Panc1 (cell line): ENCODE measurements at regions of chr14 and their contacts with region 1.

Region 1: DNA sequence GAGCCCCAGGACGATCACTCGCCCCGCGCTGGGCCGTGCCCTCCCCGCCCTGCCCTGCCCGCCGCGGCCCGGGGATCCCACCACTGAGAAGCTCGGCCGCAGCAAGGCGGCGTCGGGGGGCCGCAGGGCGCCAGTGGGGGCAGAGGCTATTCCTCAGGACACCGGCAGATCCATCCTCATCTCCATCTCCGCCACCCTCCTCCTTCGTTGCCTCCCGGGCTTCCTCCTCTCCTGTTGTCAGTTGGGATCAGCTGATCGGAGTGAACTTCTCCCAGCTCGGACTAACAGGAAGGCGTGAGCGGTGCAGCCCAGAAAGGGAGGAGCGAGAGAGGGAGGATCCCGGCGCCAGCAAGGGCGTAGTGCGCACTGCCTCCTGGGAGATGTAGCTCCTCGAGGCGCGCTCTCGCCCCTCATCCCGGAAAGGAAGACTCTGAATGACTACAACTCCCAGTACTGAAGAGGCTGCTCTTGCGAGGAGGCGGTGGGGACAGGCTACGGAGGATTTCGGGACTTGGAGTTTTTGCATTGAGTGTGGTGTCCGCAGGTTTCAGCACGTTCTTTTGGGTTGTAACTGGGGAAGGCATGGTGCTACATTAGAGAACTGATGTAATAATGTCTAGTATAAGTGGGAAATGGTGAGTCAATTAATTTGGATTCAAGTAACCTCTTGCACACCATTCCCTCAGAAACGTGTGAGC is at the start of gene ZFYVE1:
- DNase-seq: peak; percentile 93
- ATAC-seq: peak; percentile 99
- H3K4me3 ChIP-seq: peak within 1 kb of the TSS; percentile 65 to 71
- H3K27ac ChIP-seq: peak within 1 kb of the TSS; percentile 86
- H3K4me1 ChIP-seq: peaks cover 4% of the 10 kb centered on the region
- H3K27me3 ChIP-seq: no peaks in the 10 kb centered on the region
- CTCF ChIP-seq: no peak
- total RNA-seq, gene ZFYVE1: 19.8 TPM

Region 2: GRCh38 chr14:72972316-72972715 is 54.7 kb before region 1 on chr14:
- CTCF ChIA-PET with region 1: no interaction called
- POLR2A ChIA-PET with region 1: interaction called, 10 read pairs
- in situ Hi-C with region 1: no loop called
- intact Hi-C with region 1: no loop called
- DNase-seq: no peak
- ATAC-seq: no peak
- H3K4me3 ChIP-seq: no peak overlapping the region
- H3K27ac ChIP-seq: no peak overlapping the region
- H3K4me1 ChIP-seq: no peaks in the 10 kb centered on the region
- H3K27me3 ChIP-seq: no peaks in the 10 kb centered on the region
- CTCF ChIP-seq: no peak

Region 3: DNA sequence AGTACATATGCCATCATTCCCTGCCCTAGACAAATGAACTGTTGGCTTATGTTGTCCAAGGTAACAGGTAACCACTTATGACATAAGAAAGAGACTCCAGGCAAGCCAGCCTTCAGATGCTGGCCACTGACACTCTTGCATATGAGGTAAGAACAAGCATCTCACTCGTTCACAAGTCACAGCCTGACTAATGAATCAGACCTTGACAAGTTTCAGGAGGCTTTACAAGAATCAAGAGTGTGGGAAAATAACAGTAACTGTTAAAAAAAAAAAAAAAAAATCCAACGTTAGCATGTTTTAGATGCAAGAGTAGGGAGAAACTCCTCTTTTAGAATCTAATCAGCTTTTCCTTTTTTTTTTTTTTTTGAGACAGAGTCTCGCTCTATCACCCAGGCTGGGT is 40.8 kb before region 1 on chr14:
- CTCF ChIA-PET with region 1: no interaction called
- POLR2A ChIA-PET with region 1: no interaction called
- in situ Hi-C with region 1: no loop called
- intact Hi-C with region 1: no loop called
- DNase-seq: no peak
- ATAC-seq: no peak
- H3K4me3 ChIP-seq: no peak overlapping the region
- H3K27ac ChIP-seq: no peak overlapping the region
- H3K4me1 ChIP-seq: no peaks in the 10 kb centered on the region
- H3K27me3 ChIP-seq: no peaks in the 10 kb centered on the region
- CTCF ChIP-seq: no peak

Region 4: GRCh38 chr14:73069585-73069984 is 42.6 kb after region 1 on chr14:
- CTCF ChIA-PET with region 1: no interaction called
- POLR2A ChIA-PET with region 1: interaction called, 11 read pairs
- in situ Hi-C with region 1: no loop called
- intact Hi-C with region 1: no loop called
- DNase-seq: no peak
- ATAC-seq: no peak
- H3K4me3 ChIP-seq: no peak overlapping the region
- H3K27ac ChIP-seq: no peak overlapping the region
- H3K4me1 ChIP-seq: no peaks in the 10 kb centered on the region; the same call in 1 of the 2 replicates
- H3K27me3 ChIP-seq: no peaks in the 10 kb centered on the region
- CTCF ChIP-seq: no peak

Region 5: DNA sequence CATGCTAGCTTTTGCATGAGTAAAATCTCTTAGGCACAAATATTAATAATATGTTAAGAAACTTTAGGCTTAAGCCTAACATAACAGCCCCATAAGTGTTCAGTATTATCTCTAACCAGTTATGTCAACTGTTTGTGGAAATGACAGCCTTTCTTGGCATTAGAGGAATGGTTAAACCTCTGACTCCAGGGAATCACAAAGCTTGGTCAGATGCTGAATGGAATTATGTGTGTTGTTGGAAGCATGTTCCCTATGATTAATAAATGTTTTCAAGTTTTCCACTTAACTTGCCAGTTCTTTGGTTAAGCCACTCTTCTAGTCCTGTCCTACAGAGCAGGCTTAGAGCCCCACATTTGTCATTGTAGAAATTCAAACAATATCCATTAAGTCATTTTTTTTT is 126.3 kb after region 1 on chr14:
- CTCF ChIA-PET with region 1: no interaction called
- POLR2A ChIA-PET with region 1: no interaction called
- in situ Hi-C with region 1: no loop called
- intact Hi-C with region 1: no loop called
- DNase-seq: no peak
- ATAC-seq: no peak
- H3K4me3 ChIP-seq: no peak overlapping the region
- H3K27ac ChIP-seq: no peak overlapping the region
- H3K4me1 ChIP-seq: no peaks in the 10 kb centered on the region
- H3K27me3 ChIP-seq: no peaks in the 10 kb centered on the region
- CTCF ChIP-seq: no peak